Pancreas (tissue), 10 donors: ENCODE measurements at regions of chr10 and their contacts with region 1.

Region 1: GRCh38 chr10:68796605-68797004 is 30.7 kb upstream of the STOX1 start:
- DNase-seq: no peak
- ATAC-seq: no peak
- H3K4me3 ChIP-seq: no peak overlapping the region
- H3K27ac ChIP-seq: no peak overlapping the region
- H3K4me1 ChIP-seq: no peaks in the 10 kb centered on the region
- H3K27me3 ChIP-seq: no peaks in the 10 kb centered on the region
- CTCF ChIP-seq: no peak

Region 2: GRCh38 chr10:68700197-68700596 is 96.4 kb before region 1 on chr10:
- intact Hi-C with region 1: no loop called
- DNase-seq: no peak
- ATAC-seq: no peak
- H3K4me3 ChIP-seq: no peak overlapping the region
- H3K27ac ChIP-seq: no peak overlapping the region
- H3K4me1 ChIP-seq: peaks cover 0 to 5% (median 0%) of the 10 kb centered on the region in 3 donors
- H3K27me3 ChIP-seq: no peaks in the 10 kb centered on the region
- CTCF ChIP-seq: no peak

Region 3: GRCh38 chr10:68752711-68753350 is 43.8 kb before region 1 on chr10:
- intact Hi-C with region 1: loop called in 1 of 3 experiments (anchors 5 kb)
- DNase-seq: no peak
- ATAC-seq: no peak
- H3K4me3 ChIP-seq: no peak overlapping the region
- H3K27ac ChIP-seq: no peak overlapping the region
- H3K4me1 ChIP-seq: no peaks in the 10 kb centered on the region
- H3K27me3 ChIP-seq: no peaks in the 10 kb centered on the region
- CTCF ChIP-seq: no peak

Region 4: GRCh38 chr10:68848793-68849192 is 52.2 kb after region 1 on chr10:
- intact Hi-C with region 1: no loop called
- DNase-seq: no peak
- ATAC-seq: no peak
- H3K4me3 ChIP-seq: no peak overlapping the region
- H3K27ac ChIP-seq: no peak overlapping the region
- H3K4me1 ChIP-seq: no peaks in the 10 kb centered on the region
- H3K27me3 ChIP-seq: no peaks in the 10 kb centered on the region
- CTCF ChIP-seq: no peak

Region 5: DNA sequence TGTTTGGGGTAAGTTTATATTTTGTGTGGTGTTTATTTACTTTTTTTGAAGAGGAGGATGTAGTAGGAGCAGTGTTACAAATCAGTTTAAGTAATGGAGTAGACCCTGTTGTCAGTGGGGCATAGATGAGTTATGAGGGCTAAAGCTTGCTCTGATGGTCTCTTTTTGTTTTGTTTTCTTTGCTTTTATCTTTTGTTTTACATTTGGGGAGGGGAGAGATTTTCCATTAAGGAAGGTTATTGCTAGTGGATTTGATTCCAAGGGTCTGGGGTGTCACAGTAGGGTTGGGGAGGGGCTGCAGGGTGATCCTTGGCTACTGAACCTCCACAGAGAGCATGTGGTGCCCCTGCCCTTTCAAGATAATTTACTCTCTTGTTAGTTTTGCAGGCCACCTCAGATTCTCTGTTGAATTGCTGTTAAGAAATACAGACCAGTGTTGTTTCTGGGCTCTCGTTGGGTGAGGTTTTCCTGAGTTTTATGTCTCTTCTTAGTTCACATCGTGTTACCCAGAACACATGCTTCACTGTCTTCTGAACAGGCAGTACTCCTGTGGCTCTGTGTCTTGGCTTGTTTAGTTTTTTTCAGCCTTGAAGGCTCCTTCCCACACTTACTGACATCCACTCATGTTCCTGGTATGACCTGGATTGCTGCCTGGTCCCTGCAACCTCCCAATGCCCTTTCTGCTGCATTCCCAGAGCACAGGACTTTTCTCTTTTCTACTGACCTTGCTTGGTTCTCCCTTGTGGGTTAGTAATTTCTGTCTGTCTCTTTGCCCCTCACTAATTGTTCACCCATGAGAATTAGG is 196.2 kb after region 1 on chr10:
- intact Hi-C with region 1: no loop called
- DNase-seq: peak in 3 of 6 donors; percentile 14 to 29 (median 28)
- ATAC-seq: peak in 1 of 4 donors; percentile 14
- H3K4me3 ChIP-seq: no peak overlapping the region
- H3K27ac ChIP-seq: peak overlapping the region in 1 of 4 donors; percentile 0
- H3K4me1 ChIP-seq: peaks cover 0 to 33% (median 8%) of the 10 kb centered on the region in 3 donors
- H3K27me3 ChIP-seq: no peaks in the 10 kb centered on the region
- CTCF ChIP-seq: no peak